Calu3 (cell line): ENCODE measurements at regions of chr2 and their contacts with region 1.

Region 1: DNA sequence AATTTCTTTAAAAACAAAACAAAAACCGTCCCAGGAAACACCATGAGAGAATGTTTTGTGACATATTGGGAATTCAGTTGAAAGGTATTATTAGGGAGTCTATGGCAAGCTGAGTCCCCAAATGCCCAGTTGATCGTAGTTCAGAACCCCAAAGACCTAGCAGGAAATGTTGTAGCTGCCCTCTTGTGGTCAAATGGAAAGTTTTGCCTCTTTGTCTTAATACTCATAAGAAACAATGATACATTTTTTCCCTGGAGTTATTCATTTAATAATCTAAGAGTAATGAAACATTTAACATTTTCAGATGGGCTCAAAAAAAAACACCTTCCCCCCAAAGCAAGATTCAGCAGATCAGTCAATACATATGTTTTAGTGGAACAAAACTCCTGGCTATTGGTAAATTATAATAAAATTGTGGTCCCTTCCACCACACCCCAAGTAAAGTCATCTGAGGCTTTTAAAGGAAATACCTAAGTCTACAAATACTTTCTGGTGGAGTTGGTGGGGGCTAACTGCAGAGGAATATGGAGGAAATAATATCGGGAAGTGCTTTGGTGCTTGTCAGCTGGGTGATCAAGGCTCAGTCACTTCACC is 37.8 kb upstream of the EFEMP1 start:
- DNase-seq: peak; percentile 23
- H3K4me3 Mint-ChIP-seq: no peak overlapping the region
- H3K27ac Mint-ChIP-seq: peak overlapping the region; percentile 46
- H3K4me1 Mint-ChIP-seq: peaks cover 40% of the 10 kb centered on the region
- H3K27me3 Mint-ChIP-seq: no peaks in the 10 kb centered on the region
- CTCF ChIP-seq: peak; percentile 21

Region 2: DNA sequence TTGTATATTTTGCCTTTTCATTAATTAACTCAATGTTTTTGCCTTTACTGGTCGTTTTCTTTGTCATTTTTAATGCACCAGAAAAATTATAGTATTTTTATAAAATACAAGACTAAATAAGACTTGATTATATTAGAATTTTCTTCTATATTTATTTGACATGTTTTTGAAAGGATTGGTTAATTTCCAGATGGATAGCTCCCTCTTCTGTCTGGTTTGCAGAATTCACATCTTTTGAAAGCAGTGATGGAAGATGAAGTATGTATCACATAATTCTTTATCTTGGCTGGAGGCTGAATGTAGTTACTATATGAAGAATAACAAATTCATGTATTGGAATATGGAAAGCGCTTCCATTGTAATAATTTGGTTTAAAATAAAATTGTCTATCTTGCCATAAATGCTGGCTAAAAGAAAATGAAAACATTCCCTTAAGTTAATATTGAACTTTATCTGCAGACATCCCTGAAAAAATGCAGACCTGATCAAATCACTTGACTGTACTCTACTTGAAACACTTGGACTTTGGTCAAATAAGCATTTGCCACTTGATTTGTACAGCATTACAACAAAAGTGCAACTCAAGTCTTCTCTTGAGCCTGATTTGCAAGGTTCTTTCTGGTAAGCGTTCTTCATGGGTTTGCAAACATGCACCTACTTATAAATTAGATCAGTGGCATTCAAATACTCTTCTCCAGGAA is 48.5 kb after region 1 on chr2:
- CTCF ChIA-PET with region 1: no interaction called
- intact Hi-C with region 1: loop called (anchors 2 kb)
- DNase-seq: no peak
- H3K4me3 Mint-ChIP-seq: no peak overlapping the region
- H3K27ac Mint-ChIP-seq: no peak overlapping the region
- H3K4me1 Mint-ChIP-seq: no peaks in the 10 kb centered on the region
- H3K27me3 Mint-ChIP-seq: no peaks in the 10 kb centered on the region
- CTCF ChIP-seq: peak; percentile 26

Region 3: DNA sequence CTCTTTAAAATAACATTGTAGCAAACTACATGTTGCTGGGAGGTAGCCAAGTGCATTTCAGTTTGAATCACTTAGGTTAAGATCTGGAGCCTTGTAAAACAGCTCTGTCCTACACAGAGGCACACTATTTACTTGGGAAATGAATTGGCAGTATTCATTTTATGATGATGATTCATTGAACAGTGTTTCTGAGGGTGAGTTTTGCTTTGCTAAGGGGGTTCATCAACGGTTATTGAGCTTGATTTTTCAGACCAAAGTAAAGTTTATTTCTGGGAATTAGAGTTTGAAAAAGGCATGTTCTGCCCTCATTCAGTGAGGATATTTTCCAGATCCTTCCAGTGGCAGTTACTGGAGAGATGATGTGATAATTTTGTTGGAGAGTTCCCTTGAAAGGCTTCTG is 278.0 kb after region 1 on chr2:
- CTCF ChIA-PET with region 1: no interaction called
- intact Hi-C with region 1: no loop called
- DNase-seq: no peak
- H3K4me3 Mint-ChIP-seq: no peak overlapping the region
- H3K27ac Mint-ChIP-seq: no peak overlapping the region
- H3K4me1 Mint-ChIP-seq: no peaks in the 10 kb centered on the region
- H3K27me3 Mint-ChIP-seq: no peaks in the 10 kb centered on the region
- CTCF ChIP-seq: no peak